Activated naive CD4-positive, alpha-beta T cell treated with anti-CD3 and anti-CD28 coated beads for 36 hours (primary cell): ENCODE measurements at regions of chr3 and their contacts with region 1.

Region 1: GRCh38 chr3:51445544-51446280 is 54.1 kb downstream of the DCAF1 start:
- DNase-seq: no peak
- H3K4me3 Mint-ChIP-seq: no peak overlapping the region
- H3K27ac Mint-ChIP-seq: no peak overlapping the region
- H3K4me1 Mint-ChIP-seq: peaks cover 28% of the 10 kb centered on the region
- H3K27me3 Mint-ChIP-seq: no peaks in the 10 kb centered on the region

Region 2: GRCh38 chr3:51434746-51435327 is 10.9 kb before region 1 on chr3:
- CTCF ChIA-PET with region 1: interaction called, 19 read pairs
- intact Hi-C with region 1: no loop called
- DNase-seq: peak; percentile 59
- H3K4me3 Mint-ChIP-seq: no peak overlapping the region
- H3K27ac Mint-ChIP-seq: no peak overlapping the region
- H3K4me1 Mint-ChIP-seq: peaks cover 3% of the 10 kb centered on the region
- H3K27me3 Mint-ChIP-seq: no peaks in the 10 kb centered on the region

Region 3: DNA sequence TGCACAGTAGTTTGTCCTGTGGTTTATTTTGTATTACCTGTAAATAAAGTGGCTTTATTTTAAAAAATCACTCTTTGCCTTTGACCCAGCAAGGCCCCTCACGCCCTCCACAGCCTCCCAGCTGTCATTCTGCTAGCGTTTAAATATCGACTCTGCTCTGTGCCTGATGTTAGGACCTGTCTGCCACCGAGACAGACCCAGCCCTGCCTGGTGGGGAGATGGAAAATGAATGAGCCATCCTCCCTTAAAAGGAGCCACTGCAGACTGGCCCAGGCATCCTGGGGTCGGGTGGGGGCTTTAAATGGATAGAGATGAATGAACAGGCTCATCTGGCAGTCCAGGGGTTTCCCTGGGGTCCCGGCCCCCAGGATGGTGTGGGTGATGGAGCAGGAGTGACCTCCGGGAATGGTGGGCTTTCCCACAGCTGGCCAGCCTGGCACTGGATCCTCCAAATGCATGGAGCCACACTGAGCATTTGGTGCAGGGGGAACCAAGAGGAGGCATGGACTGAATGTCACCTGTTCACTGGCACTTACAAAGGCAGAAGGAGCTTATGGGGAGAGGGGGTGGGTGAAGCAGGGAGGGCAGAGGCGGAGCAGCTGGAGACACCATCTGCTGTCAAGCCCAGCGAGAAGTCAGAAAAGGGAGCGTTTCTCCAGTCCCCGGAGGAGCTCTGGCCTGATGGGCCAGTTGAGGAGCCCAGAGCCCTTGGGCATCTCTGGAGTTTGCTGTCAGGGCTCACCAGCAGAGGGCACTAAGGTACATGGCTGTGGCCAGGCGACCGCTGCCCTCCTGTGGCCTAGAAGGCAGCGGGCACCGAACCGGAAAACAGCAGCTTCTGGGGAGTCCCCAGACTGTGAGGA is 273.1 kb after region 1 on chr3:
- CTCF ChIA-PET with region 1: no interaction called
- intact Hi-C with region 1: no loop called
- DNase-seq: peak; percentile 87
- H3K4me3 Mint-ChIP-seq: no peak overlapping the region
- H3K27ac Mint-ChIP-seq: no peak overlapping the region
- H3K4me1 Mint-ChIP-seq: peaks cover 27% of the 10 kb centered on the region
- H3K27me3 Mint-ChIP-seq: no peaks in the 10 kb centered on the region